AG04449 (cell line): ENCODE measurements at regions of chr16 and their contacts with region 1.

Region 1: DNA sequence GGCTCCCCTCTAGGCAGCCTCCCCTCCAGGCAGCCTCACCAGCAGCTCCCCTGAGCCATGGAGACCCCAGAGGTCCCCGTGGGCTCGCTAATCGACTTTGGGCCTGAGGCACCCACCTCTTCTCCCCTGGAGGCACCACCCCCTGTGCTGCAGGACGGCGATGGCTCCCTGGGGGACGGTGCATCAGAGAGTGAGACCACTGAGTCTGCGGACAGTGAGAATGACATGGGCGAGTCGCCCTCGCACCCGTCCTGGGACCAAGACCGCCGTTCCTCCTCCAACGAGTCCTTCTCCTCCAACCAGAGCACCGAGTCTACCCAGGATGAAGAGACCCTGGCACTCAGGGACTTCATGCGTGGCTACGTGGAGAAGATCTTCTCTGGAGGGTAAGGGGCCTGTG is 39.4 kb downstream of the KIAA0513 start:
- DNase-seq: no peak
- H3K4me3 ChIP-seq: no peak overlapping the region
- CTCF ChIP-seq: no peak

Region 2: DNA sequence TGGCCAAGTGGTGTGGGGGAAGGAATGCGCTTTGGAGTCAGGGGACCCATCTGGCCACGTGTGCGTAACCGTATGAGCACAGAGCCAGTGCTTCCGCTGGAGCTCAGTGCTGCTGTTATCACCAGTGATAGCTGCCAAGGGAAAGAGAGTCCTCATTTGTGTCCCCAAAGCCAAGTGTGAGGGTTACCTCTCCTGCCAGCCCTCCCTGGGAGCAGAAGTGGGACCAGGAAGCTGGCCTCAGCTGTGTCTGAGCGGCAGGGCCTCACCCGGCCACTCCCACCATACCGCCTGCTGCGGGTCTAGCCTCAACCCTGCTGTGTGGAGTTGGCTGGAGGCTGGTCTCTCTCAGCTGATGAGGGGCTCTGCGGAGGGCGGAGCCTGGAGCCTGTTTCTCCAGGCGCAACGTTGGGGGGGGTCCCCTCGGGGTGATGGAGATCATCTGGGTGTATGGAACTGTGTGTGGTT is 607.0 kb before region 1 on chr16:
- CTCF ChIA-PET with region 1: no interaction called
- POLR2A ChIA-PET with region 1: no interaction called
- DNase-seq: no peak
- H3K4me3 ChIP-seq: no peak overlapping the region
- CTCF ChIP-seq: no peak

Region 3: DNA sequence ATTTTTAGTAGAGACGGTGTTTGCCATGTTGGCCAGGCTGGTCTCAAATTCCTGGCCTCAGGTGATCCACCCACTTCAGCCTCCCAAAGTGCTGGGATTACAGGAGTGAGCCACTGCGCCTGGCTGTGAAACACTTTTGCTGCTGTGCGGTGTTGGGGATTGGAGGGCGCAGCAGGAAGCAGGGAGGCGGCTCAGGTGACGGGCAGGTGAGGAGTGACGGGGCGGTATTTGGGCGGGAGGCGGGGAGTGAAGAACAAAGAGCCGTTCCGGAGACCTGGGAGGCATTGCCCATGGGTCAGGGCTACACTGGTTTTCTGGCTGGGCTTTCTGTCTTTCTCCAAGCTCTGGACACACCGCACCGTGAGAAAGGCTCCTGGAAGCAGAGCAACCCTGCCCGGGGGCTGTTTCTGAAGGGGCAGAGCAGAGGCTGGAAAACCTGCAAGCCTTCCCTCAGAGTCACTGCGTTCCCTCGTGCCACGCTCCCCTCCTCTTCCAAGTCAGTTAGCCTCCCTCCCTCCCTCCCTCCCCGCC is 225.2 kb before region 1 on chr16:
- CTCF ChIA-PET with region 1: no interaction called
- POLR2A ChIA-PET with region 1: no interaction called
- DNase-seq: no peak
- H3K4me3 ChIP-seq: no peak overlapping the region
- CTCF ChIP-seq: no peak

Region 4: GRCh38 chr16:84952335-84953189 is 114.5 kb before region 1 on chr16:
- CTCF ChIA-PET with region 1: no interaction called
- POLR2A ChIA-PET with region 1: no interaction called
- DNase-seq: no peak
- H3K4me3 ChIP-seq: no peak overlapping the region
- CTCF ChIP-seq: peak; percentile 86

Region 5: GRCh38 chr16:85010931-85011845 is 55.8 kb before region 1 on chr16 and contains the start of gene ZDHHC7:
- CTCF ChIA-PET with region 1: no interaction called
- POLR2A ChIA-PET with region 1: no interaction called
- DNase-seq: no peak
- H3K4me3 ChIP-seq: peak within 1 kb of the TSS; percentile 91
- CTCF ChIP-seq: no peak

Region 6: GRCh38 chr16:85055503-85056210 is 11.4 kb before region 1 on chr16:
- CTCF ChIA-PET with region 1: interaction called, 10 read pairs
- POLR2A ChIA-PET with region 1: no interaction called
- DNase-seq: no peak
- H3K4me3 ChIP-seq: peak overlapping the region; percentile 43
- CTCF ChIP-seq: no peak